MCF 10A (cell line): ENCODE measurements at regions of chr5 and their contacts with region 1.

Region 1: DNA sequence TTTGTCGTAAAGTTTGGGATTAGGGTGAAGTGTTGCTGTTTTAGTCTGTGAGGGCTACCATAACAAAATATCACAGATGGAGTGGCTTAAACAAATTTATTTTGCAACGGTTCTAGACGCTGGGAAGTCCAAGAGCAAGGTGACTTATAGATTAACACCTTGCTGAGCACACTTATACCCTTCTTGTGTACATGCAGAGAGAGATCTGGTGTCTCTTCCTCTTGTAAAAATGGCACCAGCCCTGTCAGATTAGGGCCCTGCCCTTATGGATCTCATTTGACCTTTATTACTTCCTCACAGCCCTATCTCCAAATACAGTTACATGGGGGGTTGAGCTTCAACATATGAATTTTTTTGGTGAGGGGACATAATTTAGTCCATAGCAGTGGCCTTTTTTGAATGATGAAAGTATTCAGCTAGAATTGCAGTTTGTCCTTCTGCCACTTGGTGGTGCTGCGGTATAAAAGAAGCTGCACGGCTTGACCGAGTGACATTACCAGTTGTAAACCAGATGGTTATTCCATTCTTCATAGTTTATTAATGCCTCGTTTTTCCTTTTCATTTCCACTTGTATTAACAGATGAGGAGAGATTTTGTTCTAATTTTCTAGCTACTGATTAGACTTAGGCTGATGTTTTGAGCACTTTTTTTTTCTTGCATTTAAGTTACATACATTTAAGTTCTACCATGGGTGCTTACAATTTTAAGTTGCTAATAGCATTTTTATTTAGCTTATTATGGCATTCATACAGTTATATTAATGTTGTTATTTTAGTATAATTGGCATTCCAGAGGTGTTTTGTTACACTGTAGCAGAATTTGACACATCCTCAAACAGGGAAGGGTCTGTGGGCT is 19.4 kb downstream of the DCP2 start:
- DNase-seq: peak; percentile 79
- H3K4me3 Mint-ChIP-seq: no peak overlapping the region
- H3K27ac Mint-ChIP-seq: no peak overlapping the region
- H3K4me1 Mint-ChIP-seq: peaks cover 10% of the 10 kb centered on the region
- H3K27me3 Mint-ChIP-seq: no peaks in the 10 kb centered on the region
- CTCF ChIP-seq: peak; percentile 92

Region 2: GRCh38 chr5:112694853-112695709 is 300.9 kb before region 1 on chr5:
- CTCF ChIA-PET with region 1: no interaction called
- POLR2A ChIA-PET with region 1: no interaction called
- intact Hi-C with region 1: no loop called
- DNase-seq: peak; percentile 50
- H3K4me3 Mint-ChIP-seq: no peak overlapping the region
- H3K27ac Mint-ChIP-seq: no peak overlapping the region
- H3K4me1 Mint-ChIP-seq: peaks cover 5% of the 10 kb centered on the region
- H3K27me3 Mint-ChIP-seq: no peaks in the 10 kb centered on the region
- CTCF ChIP-seq: no peak

Region 3: GRCh38 chr5:113020461-113021273 is 24.7 kb after region 1 on chr5:
- CTCF ChIA-PET with region 1: interaction called, 10 read pairs
- POLR2A ChIA-PET with region 1: no interaction called
- intact Hi-C with region 1: no loop called
- DNase-seq: peak; percentile 64
- H3K4me3 Mint-ChIP-seq: peak overlapping the region; percentile 14
- H3K27ac Mint-ChIP-seq: peak overlapping the region; percentile 75
- H3K4me1 Mint-ChIP-seq: peaks cover 10% of the 10 kb centered on the region
- H3K27me3 Mint-ChIP-seq: no peaks in the 10 kb centered on the region
- CTCF ChIP-seq: no peak

Region 4: DNA sequence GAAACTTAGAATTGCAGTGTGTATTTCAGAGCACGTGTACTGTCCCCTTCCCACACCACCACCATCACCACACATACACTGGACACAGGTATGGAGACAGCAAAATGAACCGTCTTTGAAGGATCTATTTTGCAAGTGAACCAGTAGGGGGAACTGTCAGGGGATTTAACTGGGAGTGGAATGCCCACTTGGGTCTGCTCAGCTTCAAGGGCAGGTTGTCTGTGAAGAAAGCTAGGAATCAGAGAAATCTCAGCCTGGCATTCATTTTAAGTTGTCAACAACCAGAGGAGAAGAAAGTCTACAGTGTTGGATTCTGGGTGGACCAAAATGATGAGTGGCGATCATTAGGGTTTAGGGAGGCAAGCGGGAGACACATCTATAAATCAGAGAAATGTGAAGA is 127.6 kb after region 1 on chr5:
- CTCF ChIA-PET with region 1: interaction called, 3 read pairs
- POLR2A ChIA-PET with region 1: no interaction called
- intact Hi-C with region 1: loop called (anchors 5 kb)
- DNase-seq: peak; percentile 31
- H3K4me3 Mint-ChIP-seq: no peak overlapping the region
- H3K27ac Mint-ChIP-seq: no peak overlapping the region
- H3K4me1 Mint-ChIP-seq: no peaks in the 10 kb centered on the region
- H3K27me3 Mint-ChIP-seq: no peaks in the 10 kb centered on the region
- CTCF ChIP-seq: no peak

Region 5: DNA sequence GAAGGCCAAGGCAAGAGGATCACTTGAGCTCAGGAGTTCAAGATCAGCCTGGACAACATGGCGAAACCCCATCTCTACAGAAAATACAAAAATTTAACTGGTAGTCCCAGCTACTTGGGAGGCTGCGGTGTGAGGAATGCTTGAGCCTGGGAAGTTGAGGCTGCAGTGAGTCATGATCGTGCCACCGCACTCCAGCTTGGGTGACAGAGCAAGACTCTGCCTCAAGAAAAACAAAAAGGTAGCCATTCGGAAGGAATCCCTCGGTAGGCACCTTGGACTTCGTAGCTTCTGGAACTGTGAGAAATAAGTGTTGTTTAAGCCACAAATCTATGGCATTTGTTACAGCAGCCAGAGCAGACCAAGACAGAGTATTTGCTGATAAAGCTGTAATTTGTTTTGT is 154.8 kb after region 1 on chr5:
- CTCF ChIA-PET with region 1: no interaction called
- POLR2A ChIA-PET with region 1: no interaction called
- intact Hi-C with region 1: no loop called
- DNase-seq: no peak
- H3K4me3 Mint-ChIP-seq: no peak overlapping the region
- H3K27ac Mint-ChIP-seq: no peak overlapping the region
- H3K4me1 Mint-ChIP-seq: peaks cover 18% of the 10 kb centered on the region
- H3K27me3 Mint-ChIP-seq: no peaks in the 10 kb centered on the region
- CTCF ChIP-seq: no peak

Region 6: GRCh38 chr5:113330533-113331208 is 334.7 kb after region 1 on chr5:
- CTCF ChIA-PET with region 1: interaction called, 18 read pairs
- POLR2A ChIA-PET with region 1: interaction called, 6 read pairs
- intact Hi-C with region 1: loop called (anchors 1 kb)
- DNase-seq: peak; percentile 93
- H3K4me3 Mint-ChIP-seq: peak overlapping the region; percentile 44
- H3K27ac Mint-ChIP-seq: peak overlapping the region; percentile 17
- H3K4me1 Mint-ChIP-seq: peaks cover 20% of the 10 kb centered on the region
- H3K27me3 Mint-ChIP-seq: no peaks in the 10 kb centered on the region
- CTCF ChIP-seq: peak; percentile 63

Region 7: DNA sequence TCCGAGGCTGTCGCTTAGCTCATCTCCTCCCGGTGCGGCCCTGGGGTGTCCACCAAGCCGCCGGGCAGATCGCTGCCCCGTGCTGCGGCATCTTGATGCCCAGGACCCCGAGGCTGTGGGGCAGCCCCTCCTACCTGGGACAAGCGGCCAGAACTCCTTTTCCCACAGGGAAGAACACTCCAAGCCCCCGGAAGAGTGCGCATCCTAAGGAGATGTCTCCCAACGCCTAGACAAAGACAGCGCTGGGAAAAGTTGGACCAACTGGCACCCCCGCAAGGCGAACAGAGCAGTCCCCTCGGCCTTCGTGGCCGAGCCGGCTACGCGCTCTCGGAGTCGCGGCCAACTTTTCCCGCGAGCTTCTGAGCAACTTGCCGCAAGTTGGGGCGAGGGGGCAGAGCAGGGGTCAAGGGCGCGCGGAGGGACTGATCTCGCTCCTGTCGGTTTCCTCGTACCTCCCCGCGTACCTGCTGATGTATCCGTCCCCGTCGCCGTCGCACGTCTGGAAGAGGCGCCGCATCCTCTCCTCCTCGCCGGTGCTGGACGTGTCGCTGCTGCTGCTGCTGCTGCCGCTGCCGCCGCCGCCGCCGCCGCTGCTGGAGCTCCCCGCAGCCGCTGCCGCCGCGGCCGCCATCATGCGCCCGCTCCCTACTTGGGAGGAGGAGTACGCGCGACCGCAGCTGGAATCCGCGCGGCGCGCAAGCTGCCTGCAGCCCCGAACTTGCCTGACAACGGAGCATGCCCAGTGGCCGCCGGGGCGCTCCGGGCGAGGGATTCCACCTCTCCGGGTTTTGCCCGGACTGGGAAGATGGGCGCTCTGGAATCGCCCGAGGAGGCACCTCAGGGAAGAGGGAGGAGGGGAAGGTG is 492.0 kb after region 1 on chr5 and contains the start of gene MCC:
- CTCF ChIA-PET with region 1: interaction called, 5 read pairs
- POLR2A ChIA-PET with region 1: interaction called, 17 read pairs
- intact Hi-C with region 1: no loop called
- DNase-seq: peak; percentile 80
- H3K4me3 Mint-ChIP-seq: peak within 1 kb of the TSS; percentile 90
- H3K27ac Mint-ChIP-seq: peak within 1 kb of the TSS; percentile 82
- H3K4me1 Mint-ChIP-seq: peaks cover 20% of the 10 kb centered on the region
- H3K27me3 Mint-ChIP-seq: no peaks in the 10 kb centered on the region
- CTCF ChIP-seq: no peak
- total RNA-seq, gene MCC: 25.3 and 28.2 TPM in 2 replicates

Region 8: GRCh38 chr5:113524927-113525326 is 528.9 kb after region 1 on chr5:
- CTCF ChIA-PET with region 1: interaction called, 10 read pairs
- POLR2A ChIA-PET with region 1: no interaction called
- intact Hi-C with region 1: no loop called
- DNase-seq: no peak
- H3K4me3 Mint-ChIP-seq: no peak overlapping the region
- H3K27ac Mint-ChIP-seq: no peak overlapping the region
- H3K4me1 Mint-ChIP-seq: peaks cover 3% of the 10 kb centered on the region
- H3K27me3 Mint-ChIP-seq: no peaks in the 10 kb centered on the region
- CTCF ChIP-seq: no peak